ENCODE measurements at regions of chr3 and their contacts with region 1.

Region 1: DNA sequence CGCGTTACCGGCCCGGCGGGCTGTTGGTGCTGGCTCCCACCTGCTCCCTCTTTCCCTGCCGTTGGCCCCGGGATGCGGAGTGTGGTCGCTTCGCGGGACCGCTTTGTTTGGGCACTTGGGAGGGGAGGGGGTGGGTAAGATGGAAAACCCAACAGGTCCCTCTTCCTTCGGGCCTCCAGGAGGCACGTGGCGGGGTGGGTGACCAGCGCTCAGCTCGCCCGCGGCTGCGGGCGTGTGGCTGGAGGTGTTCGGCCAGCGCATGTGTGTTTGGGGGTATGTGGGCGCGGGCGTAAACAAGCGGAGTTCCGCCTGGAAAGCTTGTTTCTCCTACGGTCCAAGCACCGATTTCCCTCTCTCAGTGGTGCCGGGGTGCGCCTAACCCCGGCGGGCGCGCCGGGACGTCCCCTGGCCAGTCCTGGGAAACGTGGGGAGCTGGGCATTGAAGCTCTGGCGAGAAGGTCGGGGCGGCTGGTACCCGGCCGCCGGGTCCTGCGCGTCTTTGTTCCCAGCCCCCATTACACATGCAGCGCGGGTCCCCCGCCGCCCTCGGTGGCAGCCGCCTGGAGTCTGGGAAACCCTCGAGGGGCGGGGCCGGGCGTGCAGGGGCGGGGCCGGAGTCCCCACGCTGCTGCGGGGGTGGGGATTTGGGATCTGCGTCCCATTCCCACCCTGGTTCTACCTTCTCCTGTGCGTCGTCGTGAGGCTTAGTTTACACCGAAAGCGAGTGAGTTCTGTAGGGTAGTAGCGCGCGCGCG is 1.4 kb downstream of the ACVR2B start:
- DNase-seq: no peak

Region 2: DNA sequence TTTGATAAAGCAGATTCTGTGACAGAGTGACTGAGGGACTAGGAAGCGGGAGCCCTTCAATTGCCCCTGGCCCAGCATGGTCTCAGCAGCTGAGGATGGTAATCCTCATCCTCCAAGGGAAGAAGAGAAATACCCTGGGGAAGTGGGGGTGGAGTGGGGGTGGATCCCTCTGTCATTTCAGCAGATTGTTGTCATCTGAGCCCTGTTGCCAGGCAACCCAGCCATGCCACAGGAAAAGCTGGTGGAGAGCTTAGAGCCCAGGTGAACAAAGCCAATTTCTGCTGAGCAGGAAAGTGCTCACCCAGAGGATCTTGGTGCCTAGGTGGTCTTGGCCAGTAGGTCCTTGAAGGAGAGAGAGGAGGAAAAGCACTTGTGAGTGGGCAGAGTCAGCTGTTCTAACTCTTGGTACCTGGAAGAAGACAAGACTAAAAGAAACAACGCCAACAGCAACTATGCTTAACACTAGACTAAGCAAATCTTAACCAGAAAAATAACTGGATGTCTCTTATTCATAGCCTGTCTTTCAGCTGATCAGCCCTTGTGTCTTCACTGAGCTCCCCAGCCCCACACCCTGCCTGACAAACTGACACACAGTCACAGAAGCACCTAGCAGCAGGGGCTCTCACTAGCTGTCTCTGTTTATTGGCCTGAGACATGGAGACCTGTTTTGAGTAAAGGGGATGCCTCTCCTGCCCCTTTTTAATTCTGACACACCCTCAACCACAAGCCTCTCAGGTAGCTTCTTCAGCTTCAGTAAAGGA is 1650.6 kb before region 1 on chr3:
- intact Hi-C with region 1: loop called in 1 of 2 experiments (anchors 5 kb)
- DNase-seq: no peak

Region 3: DNA sequence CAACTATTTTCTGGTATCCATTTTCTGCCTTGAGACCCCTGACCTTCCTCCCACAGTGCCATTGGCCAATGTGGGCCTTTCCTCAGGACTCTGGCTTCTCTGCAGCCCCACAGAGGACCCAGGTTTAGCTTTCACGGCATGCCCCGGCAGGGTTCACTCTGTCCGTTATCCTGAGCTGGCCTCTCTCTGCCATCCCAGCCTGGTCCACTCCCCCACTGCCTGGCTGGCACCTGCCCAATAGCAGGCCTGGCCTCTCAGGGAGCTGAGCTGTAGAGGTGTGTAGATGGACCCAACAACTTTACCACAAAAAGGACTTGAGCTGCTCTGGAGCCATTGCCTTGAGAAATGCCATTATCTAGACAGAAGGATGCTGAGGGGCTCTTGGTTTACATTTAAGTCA is 303.5 kb after region 1 on chr3:
- intact Hi-C with region 1: no loop called
- DNase-seq: no peak

Measured in posterior vena cava (tissue), 2 donors.